ENCODE measurements at regions of chr2 and their contacts with region 1.

Region 1: DNA sequence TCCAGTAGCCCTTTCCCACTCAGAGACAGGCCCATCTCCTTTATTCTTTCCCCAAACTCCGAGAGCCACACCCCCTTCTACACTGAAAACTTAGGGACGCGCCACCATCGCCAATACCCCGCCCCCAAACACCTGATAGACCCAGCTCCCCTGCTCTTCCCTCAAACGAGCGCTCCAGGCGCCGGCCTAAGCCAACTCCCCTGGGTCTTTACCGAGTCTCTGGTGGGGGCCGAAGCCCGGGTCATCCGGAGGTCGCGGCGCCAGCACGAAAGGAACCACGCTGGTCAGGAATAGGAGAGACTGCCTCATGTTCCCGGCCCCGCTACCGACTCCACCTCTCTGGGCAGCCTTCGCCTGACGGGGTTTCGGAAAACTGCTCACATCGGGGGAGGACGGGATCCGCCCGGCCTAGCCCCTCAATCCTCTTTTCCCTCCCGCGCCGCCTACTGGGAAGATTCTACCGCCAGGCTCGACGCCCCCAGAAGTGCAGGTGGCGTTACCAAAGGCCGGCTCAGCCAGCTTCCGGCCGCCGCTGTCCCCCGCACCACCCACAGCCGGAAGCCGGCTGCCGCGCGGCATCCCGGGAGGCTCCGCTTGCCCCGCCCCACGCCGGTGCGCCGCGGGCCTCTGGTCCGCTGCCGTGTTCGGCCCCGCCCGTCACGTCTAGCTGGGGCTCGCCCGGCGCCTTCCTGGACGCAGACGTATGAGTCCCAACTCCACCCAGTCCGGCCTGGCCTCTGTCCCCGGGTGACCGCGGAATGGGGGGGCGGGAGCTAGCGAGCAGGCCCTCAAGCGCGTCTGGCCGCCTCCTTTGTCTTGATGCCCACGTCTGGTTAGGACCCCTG is at the start of gene ADAM17:
- DNase-seq: peak; percentile 94
- ATAC-seq: peak; percentile 91
- H3K4me3 ChIP-seq: peak within 1 kb of the TSS; percentile 74 to 99 (median 98)
- H3K4me3 Mint-ChIP-seq: peak within 1 kb of the TSS; percentile 98
- H3K27ac ChIP-seq: peak within 1 kb of the TSS; percentile 92 to 93
- H3K27ac Mint-ChIP-seq: peak within 1 kb of the TSS; percentile 99
- H3K4me1 ChIP-seq: peaks cover 41 to 44% of the 10 kb centered on the region in 2 donors
- H3K4me1 Mint-ChIP-seq: peaks cover 47% of the 10 kb centered on the region
- H3K27me3 ChIP-seq: no peaks in the 10 kb centered on the region
- H3K27me3 Mint-ChIP-seq: no peaks in the 10 kb centered on the region
- CTCF ChIP-seq: peak; percentile 33
- total RNA-seq, gene ADAM17: 57.8 and 60.5 TPM in 2 replicates

Region 2: DNA sequence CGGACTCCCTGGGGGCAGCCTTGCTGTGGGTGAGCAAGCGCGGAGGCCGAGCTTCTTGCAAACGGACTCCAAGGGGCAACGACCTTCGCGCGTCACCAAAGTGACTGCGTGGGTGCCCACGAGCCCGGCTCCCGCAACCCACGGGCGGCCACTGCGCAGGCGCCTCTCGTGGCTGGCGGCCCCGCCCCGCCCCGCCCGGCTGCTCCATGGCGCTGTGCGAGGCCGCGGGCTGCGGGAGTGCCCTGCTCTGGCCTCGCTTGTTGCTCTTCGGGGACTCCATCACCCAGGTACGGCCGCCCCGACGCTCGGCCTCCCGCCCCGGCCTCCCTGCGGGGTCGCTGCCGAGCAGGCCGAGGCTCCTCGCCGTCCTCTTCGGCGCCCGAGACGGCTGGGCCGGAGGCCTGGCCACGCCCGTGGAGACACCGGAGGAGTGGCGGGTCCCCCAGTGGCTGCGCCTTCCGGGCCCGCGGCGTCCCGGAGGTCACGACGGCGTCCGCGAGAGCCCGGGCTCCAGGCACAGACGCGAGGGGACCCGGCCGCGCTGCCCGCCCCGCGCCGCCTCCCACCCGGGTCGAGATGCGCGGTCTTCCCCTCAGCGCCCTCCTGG is 81.1 kb before region 1 on chr2 and contains the start of gene IAH1:
- CTCF ChIA-PET with region 1: interaction called, 8 read pairs
- POLR2A ChIA-PET with region 1: interaction called, 8 read pairs
- intact Hi-C with region 1: loop called (anchors 2 kb)
- DNase-seq: peak; percentile 89
- ATAC-seq: peak; percentile 82
- H3K4me3 ChIP-seq: peak within 1 kb of the TSS; percentile 61 to 85 (median 68)
- H3K4me3 Mint-ChIP-seq: peak within 1 kb of the TSS; percentile 84
- H3K27ac ChIP-seq: peak within 1 kb of the TSS; percentile 62 to 66
- H3K27ac Mint-ChIP-seq: peak within 1 kb of the TSS; percentile 88
- H3K4me1 ChIP-seq: peaks cover 21 to 29% of the 10 kb centered on the region in 2 donors
- H3K4me1 Mint-ChIP-seq: peaks cover 40% of the 10 kb centered on the region
- H3K27me3 ChIP-seq: no peaks in the 10 kb centered on the region
- H3K27me3 Mint-ChIP-seq: no peaks in the 10 kb centered on the region
- CTCF ChIP-seq: no peak
- total RNA-seq, gene IAH1: 47.1 and 54.8 TPM in 2 replicates

Region 3: GRCh38 chr2:9538000-9538507 is 17.5 kb before region 1 on chr2:
- CTCF ChIA-PET with region 1: interaction called, 8 read pairs
- POLR2A ChIA-PET with region 1: interaction called, 11 read pairs
- intact Hi-C with region 1: loop called (anchors 2 kb)
- DNase-seq: peak; percentile 38
- ATAC-seq: no peak
- H3K4me3 ChIP-seq: no peak overlapping the region
- H3K4me3 Mint-ChIP-seq: peak overlapping the region; percentile 59
- H3K27ac ChIP-seq: peak overlapping the region in 1 of 2 donors; percentile 67
- H3K27ac Mint-ChIP-seq: peak overlapping the region; percentile 59
- H3K4me1 ChIP-seq: peaks cover 43 to 64% of the 10 kb centered on the region in 2 donors
- H3K4me1 Mint-ChIP-seq: peaks cover 66% of the 10 kb centered on the region
- H3K27me3 ChIP-seq: no peaks in the 10 kb centered on the region
- H3K27me3 Mint-ChIP-seq: no peaks in the 10 kb centered on the region
- CTCF ChIP-seq: no peak

Region 4: DNA sequence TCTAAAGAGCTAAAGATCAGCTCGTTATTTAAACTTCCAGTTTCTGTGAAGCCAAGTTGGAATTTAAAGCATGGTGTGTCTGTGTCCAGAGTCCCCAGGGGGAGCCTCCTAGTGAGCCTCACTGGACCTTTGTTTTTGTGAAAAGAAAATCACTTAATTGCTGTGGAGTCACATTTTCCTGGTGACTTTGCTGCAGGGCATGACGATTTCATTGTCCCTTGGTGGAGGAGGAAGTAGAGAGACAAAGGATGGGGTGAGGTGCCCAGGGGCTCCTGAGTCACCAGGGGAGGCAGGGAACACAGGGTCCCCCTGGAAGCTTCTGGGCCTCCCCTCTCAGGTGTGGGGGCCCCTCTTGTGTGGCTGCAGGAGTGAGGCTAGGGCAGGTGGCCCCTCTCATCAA is 1185.6 kb after region 1 on chr2:
- CTCF ChIA-PET with region 1: no interaction called
- POLR2A ChIA-PET with region 1: no interaction called
- intact Hi-C with region 1: loop called (anchors 10 kb)
- DNase-seq: no peak
- ATAC-seq: no peak
- H3K4me3 ChIP-seq: no peak overlapping the region
- H3K4me3 Mint-ChIP-seq: no peak overlapping the region
- H3K27ac ChIP-seq: no peak overlapping the region
- H3K27ac Mint-ChIP-seq: no peak overlapping the region
- H3K4me1 ChIP-seq: peaks cover 15% of the 10 kb centered on the region in 2 donors
- H3K4me1 Mint-ChIP-seq: peaks cover 17% of the 10 kb centered on the region
- H3K27me3 ChIP-seq: no peaks in the 10 kb centered on the region
- H3K27me3 Mint-ChIP-seq: no peaks in the 10 kb centered on the region
- CTCF ChIP-seq: no peak

Measured in B cell (primary cell).